ENCODE measurements at regions of chr9 and their contacts with region 1.

Region 1: DNA sequence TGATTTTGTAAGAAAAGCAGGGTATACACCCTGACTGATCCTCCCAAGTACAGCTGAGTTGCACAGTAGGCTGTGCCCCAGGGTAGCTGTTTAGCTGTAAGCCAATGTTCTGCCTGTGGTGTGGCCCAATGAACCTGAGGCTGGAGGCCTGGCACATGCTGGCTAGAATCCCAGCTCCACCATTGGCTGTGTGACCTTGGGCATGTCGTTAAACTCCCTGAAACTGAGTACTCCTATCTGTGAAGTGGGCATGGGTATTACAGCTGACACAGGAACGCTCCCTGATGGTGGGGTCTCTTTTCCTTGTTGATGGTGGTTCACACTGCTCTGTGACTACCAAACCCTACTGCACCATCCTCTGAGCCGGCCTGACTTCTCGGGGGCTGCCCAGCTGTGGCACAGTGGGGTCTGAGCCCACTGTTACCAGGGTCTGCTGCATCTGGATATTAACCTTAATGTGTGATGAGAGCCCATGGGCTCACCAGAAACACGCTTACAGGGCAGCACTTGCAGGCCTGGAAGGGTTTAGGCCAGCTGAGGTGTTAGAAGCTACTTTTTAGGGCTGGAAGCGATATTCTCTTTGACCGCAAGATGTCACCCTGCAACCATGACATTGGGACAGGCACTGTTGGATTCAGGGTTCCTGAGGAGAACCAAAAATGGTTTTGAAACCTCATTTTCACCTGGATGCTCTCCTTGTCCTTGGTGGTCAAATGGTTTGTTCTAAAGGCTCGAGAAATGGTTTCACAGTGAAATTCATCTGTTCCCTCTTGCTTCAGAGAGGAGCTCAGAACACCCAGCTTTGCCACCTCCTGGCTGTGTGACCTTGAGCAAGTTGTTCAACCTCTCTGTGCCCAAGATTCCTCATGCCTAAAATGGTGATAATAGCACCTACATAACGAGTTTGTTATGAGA is 6.8 kb upstream of the GADD45G start:
- DNase-seq: peak; percentile 55
- H3K4me3 ChIP-seq: no peak overlapping the region
- H3K27ac ChIP-seq: no peak overlapping the region
- H3K4me1 ChIP-seq: no peaks in the 10 kb centered on the region
- H3K27me3 ChIP-seq: peaks cover 2% of the 10 kb centered on the region
- CTCF ChIP-seq: peak; percentile 74 to 82

Region 2: GRCh38 chr9:90102292-90102901 is 504.4 kb after region 1 on chr9:
- CTCF ChIA-PET with region 1: interaction called, 9 read pairs
- dilution Hi-C with region 1: loop called (anchors 25 kb)
- in situ Hi-C with region 1: loop called in 1 of 2 experiments (anchors 5 kb)
- intact Hi-C with region 1: loop called (anchors 1 kb)
- DNase-seq: peak; percentile 80
- H3K4me3 ChIP-seq: no peak overlapping the region
- H3K27ac ChIP-seq: no peak overlapping the region
- H3K4me1 ChIP-seq: no peaks in the 10 kb centered on the region
- H3K27me3 ChIP-seq: no peaks in the 10 kb centered on the region
- CTCF ChIP-seq: peak; percentile 66 to 89

Region 3: GRCh38 chr9:90142580-90142979 is 544.6 kb after region 1 on chr9:
- CTCF ChIA-PET with region 1: no interaction called
- dilution Hi-C with region 1: no loop called
- in situ Hi-C with region 1: no loop called
- intact Hi-C with region 1: loop called (anchors 5 kb)
- DNase-seq: peak; percentile 35
- H3K4me3 ChIP-seq: no peak overlapping the region
- H3K27ac ChIP-seq: no peak overlapping the region
- H3K4me1 ChIP-seq: no peaks in the 10 kb centered on the region
- H3K27me3 ChIP-seq: peaks cover 2% of the 10 kb centered on the region
- CTCF ChIP-seq: peak; percentile 50 to 58

Region 4: DNA sequence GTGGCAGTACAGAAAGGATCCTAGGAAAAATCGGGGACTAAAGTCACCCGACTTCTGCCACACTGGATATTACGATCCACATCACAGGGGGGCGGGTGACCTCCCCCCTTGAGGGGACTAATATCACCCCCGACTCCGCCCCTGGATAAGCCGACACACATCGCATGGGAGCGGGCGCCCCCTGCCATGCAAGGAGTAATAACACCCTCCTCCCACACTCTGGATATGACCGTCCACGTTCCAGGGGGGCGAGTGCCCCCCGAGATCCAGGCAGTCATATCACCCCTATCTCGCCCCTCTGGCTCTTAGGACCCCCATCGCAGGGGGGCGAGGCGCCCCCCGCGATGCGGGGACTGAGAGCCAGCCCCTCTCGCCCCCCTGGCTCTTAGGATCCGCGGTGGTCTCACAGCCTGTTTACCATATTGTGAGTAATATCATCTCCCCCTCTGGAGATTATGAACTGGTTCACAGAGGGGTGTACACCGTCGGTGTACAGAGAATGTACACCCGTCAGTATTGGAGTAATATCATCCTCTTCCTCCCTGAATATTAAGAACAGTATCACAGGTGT is 621.7 kb after region 1 on chr9:
- CTCF ChIA-PET with region 1: no interaction called
- dilution Hi-C with region 1: no loop called
- in situ Hi-C with region 1: no loop called
- intact Hi-C with region 1: loop called (anchors 1 kb)
- DNase-seq: no peak
- H3K4me3 ChIP-seq: no peak overlapping the region
- H3K27ac ChIP-seq: no peak overlapping the region
- H3K4me1 ChIP-seq: no peaks in the 10 kb centered on the region
- H3K27me3 ChIP-seq: no peaks in the 10 kb centered on the region
- CTCF ChIP-seq: peak in 1 of 2 donors; percentile 24

Region 5: GRCh38 chr9:90642570-90643539 is 1044.9 kb after region 1 on chr9 and contains the start of gene DIRAS2:
- CTCF ChIA-PET with region 1: no interaction called
- dilution Hi-C with region 1: no loop called
- in situ Hi-C with region 1: no loop called
- intact Hi-C with region 1: loop called (anchors 10 kb)
- DNase-seq: peak; percentile 59
- H3K4me3 ChIP-seq: peak within 1 kb of the TSS; percentile 30 to 55 (median 51)
- H3K27ac ChIP-seq: no peak within 1 kb of the TSS
- H3K4me1 ChIP-seq: peaks cover 5% of the 10 kb centered on the region
- H3K27me3 ChIP-seq: peaks cover 13% of the 10 kb centered on the region
- CTCF ChIP-seq: peak; percentile 30 to 59
- total RNA-seq, gene DIRAS2: not detected

Region 6: DNA sequence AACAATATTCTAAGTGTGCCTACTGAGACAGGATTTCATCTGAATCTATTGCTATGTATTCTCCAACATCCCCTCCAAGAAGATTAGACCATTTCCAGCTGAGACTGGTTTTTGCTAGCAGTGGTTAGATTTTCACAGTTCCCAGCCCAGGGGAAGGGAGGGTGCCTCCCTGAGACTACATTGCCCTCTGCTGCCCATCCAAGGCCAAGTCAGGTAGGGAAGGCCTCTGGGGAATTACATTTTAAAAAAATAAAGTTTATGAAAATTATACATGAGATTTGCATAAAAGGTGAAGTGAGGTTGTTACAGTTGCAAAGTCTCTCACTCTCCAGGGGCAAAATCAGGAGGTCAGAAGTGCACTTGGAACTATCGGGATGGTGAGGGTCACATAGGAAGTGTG is 1175.6 kb after region 1 on chr9:
- CTCF ChIA-PET with region 1: no interaction called
- dilution Hi-C with region 1: no loop called
- in situ Hi-C with region 1: loop called in 1 of 2 experiments (anchors 25 kb)
- intact Hi-C with region 1: no loop called
- DNase-seq: peak; percentile 9
- H3K4me3 ChIP-seq: no peak overlapping the region
- H3K27ac ChIP-seq: no peak overlapping the region
- H3K4me1 ChIP-seq: peaks cover 3% of the 10 kb centered on the region
- H3K27me3 ChIP-seq: no peaks in the 10 kb centered on the region
- CTCF ChIP-seq: peak; percentile 47 to 61